Activated T-helper 1 cell treated with anti-CD3 and anti-CD28 coated beads, Interleukin-12 subunit alpha, Interleukin-12 subunit beta, Interleukin-2, Interleukin-4 antibody, amounts not matched to agents 30 ng/mL and 10 ng/mL and 1 ng/mL, durations not matched to agents 14 hours and 24 hours and 36 hours (primary cell): ENCODE measurements at regions of chr17 and their contacts with region 1.

Region 1: DNA sequence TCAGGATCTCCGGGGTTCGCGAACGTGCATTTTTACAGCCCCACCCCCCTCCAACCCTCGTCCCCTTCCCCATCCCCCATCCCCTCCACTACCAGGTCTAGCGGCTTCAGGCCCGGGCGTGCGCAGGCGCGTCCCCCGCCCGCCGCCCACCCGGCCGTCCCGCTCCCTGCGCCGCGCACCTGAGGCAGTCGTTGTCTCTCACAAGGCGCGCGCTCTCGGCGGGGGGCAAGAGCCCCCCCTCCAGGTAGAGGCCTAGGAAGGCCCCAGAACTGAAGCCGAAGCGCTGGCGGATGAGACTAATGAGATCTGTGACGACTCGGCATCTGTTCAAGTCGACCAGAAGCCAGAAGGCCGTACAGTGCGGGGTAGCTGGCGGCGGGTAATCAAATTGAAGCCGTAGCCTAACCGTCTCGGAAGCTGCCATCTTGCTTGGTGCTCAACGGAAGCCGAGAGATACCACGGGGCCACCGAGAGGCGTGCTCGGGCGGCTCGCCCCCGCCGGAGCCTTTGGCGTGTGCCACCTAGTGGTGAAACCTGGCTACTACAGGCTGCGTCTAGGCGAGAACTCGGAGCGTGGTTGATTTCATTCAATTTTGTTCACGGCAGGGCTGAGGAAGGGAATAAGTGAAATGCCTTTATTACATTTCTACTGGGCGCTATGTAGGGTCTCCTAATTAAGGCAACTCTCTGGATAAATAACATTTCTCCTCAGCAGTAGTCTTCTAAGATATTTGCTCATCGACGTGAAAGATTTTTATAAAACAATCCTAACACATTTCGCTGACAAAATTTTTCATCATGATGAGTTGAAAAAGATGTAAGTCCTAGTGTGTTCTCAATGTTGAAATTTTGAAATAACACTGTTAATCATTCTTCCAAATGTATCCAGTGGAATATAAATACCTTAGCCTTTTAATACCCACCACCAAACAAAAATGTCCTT is at the start of gene COIL:
- DNase-seq: peak; percentile 89
- H3K4me3 Mint-ChIP-seq: peak within 1 kb of the TSS; percentile 82
- H3K27ac Mint-ChIP-seq: peak within 1 kb of the TSS; percentile 84
- H3K4me1 Mint-ChIP-seq: peaks cover 22% of the 10 kb centered on the region
- H3K27me3 Mint-ChIP-seq: no peaks in the 10 kb centered on the region
- total RNA-seq, gene COIL: 21.0 and 25.2 TPM in 2 replicates

Region 2: DNA sequence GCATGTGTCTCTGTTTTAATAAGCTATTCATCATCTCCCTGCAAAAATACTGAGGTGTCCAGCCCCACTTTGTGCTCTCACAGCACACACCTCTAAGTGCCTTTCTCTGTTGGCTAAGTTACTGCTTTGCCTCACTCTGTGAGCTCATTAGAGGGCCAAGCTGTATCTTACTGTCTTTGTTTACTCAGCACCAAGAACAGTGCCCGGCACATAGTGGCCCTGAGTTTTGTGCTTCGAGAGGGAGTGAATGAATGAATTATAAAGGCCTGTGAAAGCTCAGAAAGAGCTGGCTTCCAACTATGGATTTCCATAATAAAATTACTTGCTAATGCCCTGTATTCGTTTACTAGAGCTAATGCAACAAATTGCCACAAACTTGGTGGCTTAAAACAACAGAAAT is 417.6 kb before region 1 on chr17:
- intact Hi-C with region 1: no loop called
- DNase-seq: no peak
- H3K4me3 Mint-ChIP-seq: no peak overlapping the region
- H3K27ac Mint-ChIP-seq: no peak overlapping the region
- H3K4me1 Mint-ChIP-seq: no peaks in the 10 kb centered on the region
- H3K27me3 Mint-ChIP-seq: no peaks in the 10 kb centered on the region

Region 3: DNA sequence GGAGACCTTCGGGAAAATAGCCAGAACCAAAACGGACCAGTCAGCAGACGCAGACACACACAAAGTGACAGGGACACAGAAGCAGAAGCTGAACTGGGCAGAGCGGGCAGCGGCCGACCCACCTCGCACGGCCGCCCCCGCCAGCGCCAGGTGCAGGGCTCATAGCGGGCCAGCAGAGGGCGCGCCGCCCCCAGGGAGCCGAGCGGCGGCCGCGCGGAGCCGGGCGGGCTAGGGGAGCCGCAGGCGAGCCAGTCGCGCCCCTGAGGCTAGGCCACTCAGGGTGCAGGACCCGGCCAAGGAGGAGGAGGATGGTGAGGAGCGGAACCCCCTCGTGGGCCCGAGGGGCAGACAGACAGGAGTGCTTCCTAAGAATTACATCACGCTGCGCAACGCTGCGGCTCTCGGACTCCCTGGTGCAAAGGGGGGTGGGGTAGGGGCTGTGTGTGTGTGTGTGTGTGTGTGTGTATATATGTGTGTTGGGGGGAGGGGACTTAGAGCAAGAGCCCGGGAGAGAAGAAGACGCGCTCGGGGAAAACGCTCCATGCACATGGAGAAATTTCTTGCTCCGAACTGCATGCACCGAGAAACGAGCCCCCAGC is 368.3 kb before region 1 on chr17:
- intact Hi-C with region 1: loop called (anchors 5 kb)
- DNase-seq: peak; percentile 39
- H3K4me3 Mint-ChIP-seq: peak overlapping the region; percentile 66
- H3K27ac Mint-ChIP-seq: no peak overlapping the region
- H3K4me1 Mint-ChIP-seq: peaks cover 17% of the 10 kb centered on the region
- H3K27me3 Mint-ChIP-seq: peaks cover 56% of the 10 kb centered on the region

Region 4: GRCh38 chr17:56819431-56820145 is 141.3 kb before region 1 on chr17:
- intact Hi-C with region 1: loop called (anchors 1 kb)
- DNase-seq: peak; percentile 62
- H3K4me3 Mint-ChIP-seq: no peak overlapping the region
- H3K27ac Mint-ChIP-seq: no peak overlapping the region
- H3K4me1 Mint-ChIP-seq: peaks cover 7% of the 10 kb centered on the region
- H3K27me3 Mint-ChIP-seq: peaks cover 6% of the 10 kb centered on the region

Region 5: GRCh38 chr17:56913864-56914640 is 46.8 kb before region 1 on chr17 and contains the start of gene TRIM25:
- intact Hi-C with region 1: loop called (anchors 1 kb)
- DNase-seq: peak; percentile 76
- H3K4me3 Mint-ChIP-seq: peak within 1 kb of the TSS; percentile 93
- H3K27ac Mint-ChIP-seq: peak within 1 kb of the TSS; percentile 95
- H3K4me1 Mint-ChIP-seq: peaks cover 65% of the 10 kb centered on the region
- H3K27me3 Mint-ChIP-seq: peaks cover 2% of the 10 kb centered on the region
- total RNA-seq, gene TRIM25: 86.9 and 98.2 TPM in 2 replicates

Region 6: GRCh38 chr17:56939901-56940343 is 20.9 kb before region 1 on chr17:
- intact Hi-C with region 1: loop called (anchors 2 kb)
- DNase-seq: no peak
- H3K4me3 Mint-ChIP-seq: no peak overlapping the region
- H3K27ac Mint-ChIP-seq: peak overlapping the region; percentile 58
- H3K4me1 Mint-ChIP-seq: peaks cover 23% of the 10 kb centered on the region
- H3K27me3 Mint-ChIP-seq: no peaks in the 10 kb centered on the region

Region 7: GRCh38 chr17:56977673-56978395 is 17.0 kb after region 1 on chr17 and contains the start of gene SCPEP1:
- intact Hi-C with region 1: loop called (anchors 1 kb)
- DNase-seq: peak; percentile 67
- H3K4me3 Mint-ChIP-seq: peak within 1 kb of the TSS; percentile 89
- H3K27ac Mint-ChIP-seq: peak within 1 kb of the TSS; percentile 79
- H3K4me1 Mint-ChIP-seq: peaks cover 19% of the 10 kb centered on the region
- H3K27me3 Mint-ChIP-seq: peaks cover 29% of the 10 kb centered on the region
- total RNA-seq, gene SCPEP1: 11.6 and 13.9 TPM in 2 replicates

Region 8: GRCh38 chr17:57045868-57046704 is 85.2 kb after region 1 on chr17:
- intact Hi-C with region 1: no loop called
- DNase-seq: peak; percentile 28
- H3K4me3 Mint-ChIP-seq: peak overlapping the region; percentile 75
- H3K27ac Mint-ChIP-seq: peak overlapping the region; percentile 76
- H3K4me1 Mint-ChIP-seq: peaks cover 25% of the 10 kb centered on the region
- H3K27me3 Mint-ChIP-seq: peaks cover 60% of the 10 kb centered on the region

Region 9: GRCh38 chr17:57084802-57085447 is 124.1 kb after region 1 on chr17 and contains the start of gene AKAP1:
- intact Hi-C with region 1: loop called (anchors 1 kb)
- DNase-seq: peak; percentile 96
- H3K4me3 Mint-ChIP-seq: peak within 1 kb of the TSS; percentile 92
- H3K27ac Mint-ChIP-seq: peak within 1 kb of the TSS; percentile 87
- H3K4me1 Mint-ChIP-seq: peaks cover 28% of the 10 kb centered on the region
- H3K27me3 Mint-ChIP-seq: peaks cover 9% of the 10 kb centered on the region
- total RNA-seq, gene AKAP1: 53.8 and 59.9 TPM in 2 replicates

Region 10: DNA sequence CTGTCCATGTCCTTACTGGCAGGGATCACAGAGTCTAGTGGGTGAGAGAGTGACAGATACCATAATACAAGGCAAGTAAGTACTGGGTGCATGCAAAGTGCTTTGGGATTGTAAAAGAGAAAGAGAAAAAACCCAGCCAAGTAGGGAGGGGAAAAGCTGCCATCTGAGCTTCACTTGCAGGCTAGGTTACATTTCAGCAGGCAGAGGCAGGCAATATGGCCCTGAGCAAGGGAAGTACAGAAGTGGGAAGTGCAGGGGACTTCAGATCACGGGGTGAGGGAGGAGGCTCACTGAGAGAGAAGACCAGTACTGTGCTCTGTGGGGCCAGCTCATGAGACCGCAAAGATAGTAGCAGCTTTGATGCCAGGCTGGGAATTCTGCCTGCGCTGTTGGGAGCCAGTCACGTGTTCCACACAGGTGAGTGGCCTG is 526.0 kb after region 1 on chr17:
- intact Hi-C with region 1: no loop called
- DNase-seq: no peak
- H3K4me3 Mint-ChIP-seq: peak overlapping the region; percentile 27
- H3K27ac Mint-ChIP-seq: peak overlapping the region; percentile 33
- H3K4me1 Mint-ChIP-seq: peaks cover 64% of the 10 kb centered on the region
- H3K27me3 Mint-ChIP-seq: no peaks in the 10 kb centered on the region